B cell (primary cell): ENCODE measurements at regions of chr22 and their contacts with region 1.

Region 1: DNA sequence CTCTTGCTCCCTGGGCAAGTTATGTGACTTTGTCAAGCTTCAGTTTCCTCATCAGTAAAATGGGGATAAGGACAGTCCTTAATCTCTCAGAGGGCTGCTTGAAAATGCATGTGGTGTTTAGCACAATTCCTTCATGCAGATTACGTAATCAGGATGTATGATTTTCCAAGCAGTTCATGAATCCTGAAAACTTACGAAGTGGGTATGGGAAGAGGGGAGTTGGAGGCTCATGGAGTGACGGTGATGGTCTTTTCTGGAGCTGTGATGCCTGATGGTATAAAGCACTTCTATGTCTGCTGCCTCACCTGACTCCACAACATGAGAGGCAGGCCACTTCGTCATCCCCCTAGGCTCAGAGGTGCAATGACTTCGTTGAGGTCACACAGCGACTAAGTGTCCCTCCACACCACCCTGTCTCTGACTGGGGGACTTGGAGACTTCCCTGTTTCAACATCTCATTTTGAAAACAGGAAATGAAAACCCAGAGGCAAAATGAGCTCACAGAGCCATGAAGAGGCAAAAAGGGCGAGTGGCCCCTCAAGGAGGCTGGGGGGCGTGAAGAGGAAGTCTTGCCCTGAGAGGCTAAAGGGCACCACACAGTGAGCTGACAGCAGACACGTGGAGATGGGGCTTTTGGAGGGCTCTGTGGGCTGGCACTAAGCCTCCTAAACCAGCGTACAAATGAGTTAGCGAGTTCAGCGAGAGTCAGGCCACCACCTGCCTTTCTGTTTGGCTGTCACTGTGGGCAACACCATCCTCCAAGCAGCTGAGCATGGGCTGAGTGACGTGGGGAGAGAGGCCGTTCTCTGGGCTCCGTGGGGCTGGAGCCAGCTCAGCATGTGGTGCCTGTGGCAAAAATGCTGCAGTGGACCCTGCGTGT is 10.1 kb downstream of the MCM5 start:
- DNase-seq: peak; percentile 96
- ATAC-seq: peak; percentile 89
- H3K4me3 ChIP-seq: peak overlapping the region in 3 of 5 experiments; percentile 1 to 45 (median 21)
- H3K4me3 Mint-ChIP-seq: peak overlapping the region; percentile 83
- H3K27ac ChIP-seq: peak overlapping the region; percentile 99
- H3K27ac Mint-ChIP-seq: peak overlapping the region; percentile 96
- H3K4me1 ChIP-seq: peaks cover 31 to 39% of the 10 kb centered on the region in 2 donors
- H3K4me1 Mint-ChIP-seq: peaks cover 53% of the 10 kb centered on the region
- H3K27me3 ChIP-seq: no peaks in the 10 kb centered on the region
- H3K27me3 Mint-ChIP-seq: no peaks in the 10 kb centered on the region
- CTCF ChIP-seq: no peak

Region 2: DNA sequence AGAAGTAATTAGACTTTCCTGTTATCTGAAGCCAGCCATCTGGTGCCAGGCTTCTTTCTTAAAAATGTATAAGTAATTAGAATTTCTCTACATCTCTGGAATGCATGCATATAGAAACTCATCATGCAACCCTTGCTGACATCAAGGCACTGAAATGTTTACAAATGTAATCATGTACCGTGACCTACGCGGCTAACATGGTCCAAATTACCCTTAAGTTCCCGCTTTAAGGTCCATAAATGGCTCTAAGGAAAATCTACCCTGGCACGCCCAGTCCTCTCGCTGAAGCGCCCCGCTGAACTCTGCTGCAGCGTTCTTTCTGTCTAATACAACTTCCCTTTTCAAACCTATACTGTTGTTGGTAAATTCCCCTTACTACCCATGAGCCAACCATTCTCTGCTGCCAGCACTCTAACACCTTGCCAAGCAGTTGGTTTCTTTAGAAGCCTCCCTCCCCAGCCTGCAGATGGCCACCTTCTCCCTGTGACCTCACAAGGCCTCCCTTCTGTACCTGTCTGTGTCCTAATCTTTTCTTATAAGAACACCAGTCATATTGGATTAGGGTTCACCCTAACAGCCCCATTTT is 42.6 kb before region 1 on chr22:
- CTCF ChIA-PET with region 1: interaction called, 31 read pairs
- POLR2A ChIA-PET with region 1: interaction called, 6 read pairs
- intact Hi-C with region 1: loop called (anchors 1 kb)
- DNase-seq: peak; percentile 89
- ATAC-seq: peak; percentile 88
- H3K4me3 ChIP-seq: peak overlapping the region in 1 of 5 experiments; percentile 5
- H3K4me3 Mint-ChIP-seq: peak overlapping the region; percentile 65
- H3K27ac ChIP-seq: peak overlapping the region; percentile 37 to 67
- H3K27ac Mint-ChIP-seq: peak overlapping the region; percentile 81
- H3K4me1 ChIP-seq: peaks cover 30 to 59% of the 10 kb centered on the region in 2 donors
- H3K4me1 Mint-ChIP-seq: peaks cover 49% of the 10 kb centered on the region
- H3K27me3 ChIP-seq: no peaks in the 10 kb centered on the region
- H3K27me3 Mint-ChIP-seq: no peaks in the 10 kb centered on the region
- CTCF ChIP-seq: peak; percentile 28

Region 3: GRCh38 chr22:35392357-35392756 is 17.7 kb before region 1 on chr22:
- CTCF ChIA-PET with region 1: interaction called, 60 read pairs
- POLR2A ChIA-PET with region 1: interaction called, 18 read pairs
- intact Hi-C with region 1: no loop called
- DNase-seq: peak; percentile 59
- ATAC-seq: peak; percentile 79
- H3K4me3 ChIP-seq: no peak overlapping the region
- H3K4me3 Mint-ChIP-seq: peak overlapping the region; percentile 54
- H3K27ac ChIP-seq: peak overlapping the region; percentile 34 to 48
- H3K27ac Mint-ChIP-seq: peak overlapping the region; percentile 73
- H3K4me1 ChIP-seq: peaks cover 22 to 32% of the 10 kb centered on the region in 2 donors
- H3K4me1 Mint-ChIP-seq: peaks cover 34% of the 10 kb centered on the region
- H3K27me3 ChIP-seq: no peaks in the 10 kb centered on the region
- H3K27me3 Mint-ChIP-seq: no peaks in the 10 kb centered on the region
- CTCF ChIP-seq: no peak

Region 4: DNA sequence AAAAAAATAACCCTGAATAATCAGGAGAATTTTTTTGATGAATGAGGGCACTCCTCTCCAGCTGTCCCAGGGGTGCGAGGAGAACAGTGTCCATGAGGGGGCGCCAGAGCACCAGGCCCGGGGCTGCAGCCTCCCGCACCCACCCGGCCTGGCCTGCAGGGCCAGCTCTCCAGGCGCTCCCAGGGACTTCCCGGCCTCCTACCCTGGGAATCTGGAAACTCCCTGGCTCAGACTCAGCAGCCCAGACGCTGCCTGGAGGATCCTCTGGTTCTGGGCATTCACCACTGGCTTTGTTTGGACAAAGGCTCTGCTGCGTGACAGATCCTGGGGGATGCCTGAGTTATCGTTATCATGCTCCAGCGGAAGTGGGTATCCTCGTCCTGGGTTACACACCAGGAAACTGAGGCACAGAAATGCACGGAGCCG is 20.9 kb after region 1 on chr22:
- CTCF ChIA-PET with region 1: interaction called, 21 read pairs
- POLR2A ChIA-PET with region 1: interaction called, 5 read pairs
- intact Hi-C with region 1: no loop called
- DNase-seq: peak; percentile 68
- ATAC-seq: peak; percentile 80
- H3K4me3 ChIP-seq: no peak overlapping the region
- H3K4me3 Mint-ChIP-seq: no peak overlapping the region
- H3K27ac ChIP-seq: no peak overlapping the region
- H3K27ac Mint-ChIP-seq: no peak overlapping the region
- H3K4me1 ChIP-seq: no peaks in the 10 kb centered on the region
- H3K4me1 Mint-ChIP-seq: peaks cover 6% of the 10 kb centered on the region
- H3K27me3 ChIP-seq: no peaks in the 10 kb centered on the region
- H3K27me3 Mint-ChIP-seq: no peaks in the 10 kb centered on the region
- CTCF ChIP-seq: peak; percentile 82

Region 5: GRCh38 chr22:35568751-35569725 is 159.0 kb after region 1 on chr22:
- CTCF ChIA-PET with region 1: no interaction called
- POLR2A ChIA-PET with region 1: no interaction called
- intact Hi-C with region 1: no loop called
- DNase-seq: no peak
- ATAC-seq: no peak
- H3K4me3 ChIP-seq: no peak overlapping the region
- H3K4me3 Mint-ChIP-seq: no peak overlapping the region
- H3K27ac ChIP-seq: no peak overlapping the region
- H3K27ac Mint-ChIP-seq: no peak overlapping the region
- H3K4me1 ChIP-seq: no peaks in the 10 kb centered on the region
- H3K4me1 Mint-ChIP-seq: no peaks in the 10 kb centered on the region
- H3K27me3 ChIP-seq: peaks cover 0 to 16% (median 0%) of the 10 kb centered on the region in 4 experiments
- H3K27me3 Mint-ChIP-seq: peaks cover 38% of the 10 kb centered on the region
- CTCF ChIP-seq: no peak

Region 6: DNA sequence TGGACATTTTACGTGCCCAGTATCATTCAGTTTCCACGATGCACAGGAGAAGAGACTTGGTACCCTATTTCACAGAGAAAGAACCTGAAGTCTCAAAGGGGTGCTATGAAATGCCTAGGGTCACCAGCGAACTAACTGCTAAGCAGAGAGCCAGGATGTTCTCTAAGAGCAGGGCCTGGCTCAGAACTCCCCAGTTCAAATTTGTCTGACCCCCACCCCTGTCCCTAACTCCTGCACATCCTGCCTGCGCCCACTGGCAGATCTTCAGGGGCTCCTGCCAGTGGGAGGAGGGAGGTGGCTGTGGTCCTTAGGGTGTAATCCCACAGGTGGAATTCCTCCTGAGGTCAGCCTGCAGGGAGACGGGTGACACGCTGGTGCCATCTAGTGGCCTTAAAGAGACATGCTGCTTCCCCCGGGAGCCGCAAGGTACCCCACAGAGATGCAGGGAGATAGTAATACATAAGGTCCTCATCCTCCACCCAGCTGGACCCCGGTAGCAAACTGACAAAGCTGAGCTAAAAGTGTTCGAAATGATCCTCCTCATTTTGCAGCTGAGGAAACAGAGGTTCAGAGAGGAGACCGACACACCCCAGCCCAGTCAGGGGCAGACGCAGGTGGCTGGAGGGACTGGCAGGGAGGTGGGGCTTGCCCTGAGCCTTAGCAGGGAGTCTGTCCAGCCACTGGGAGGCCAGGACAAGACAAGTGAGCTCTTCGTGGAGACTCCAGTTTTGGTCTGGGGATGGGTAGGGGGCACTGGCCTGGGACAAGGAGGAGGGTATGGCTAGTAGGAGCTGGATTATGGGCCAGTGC is 173.0 kb after region 1 on chr22:
- CTCF ChIA-PET with region 1: interaction called, 26 read pairs
- POLR2A ChIA-PET with region 1: no interaction called
- intact Hi-C with region 1: loop called (anchors 1 kb)
- DNase-seq: peak; percentile 81
- ATAC-seq: peak; percentile 77
- H3K4me3 ChIP-seq: no peak overlapping the region
- H3K4me3 Mint-ChIP-seq: no peak overlapping the region
- H3K27ac ChIP-seq: no peak overlapping the region
- H3K27ac Mint-ChIP-seq: no peak overlapping the region
- H3K4me1 ChIP-seq: peaks cover 0 to 7% of the 10 kb centered on the region in 2 donors
- H3K4me1 Mint-ChIP-seq: no peaks in the 10 kb centered on the region
- H3K27me3 ChIP-seq: no peaks in the 10 kb centered on the region
- H3K27me3 Mint-ChIP-seq: no peaks in the 10 kb centered on the region
- CTCF ChIP-seq: peak; percentile 95